ENCODE measurements at regions of chr19 and their contacts with region 1.

Region 1: DNA sequence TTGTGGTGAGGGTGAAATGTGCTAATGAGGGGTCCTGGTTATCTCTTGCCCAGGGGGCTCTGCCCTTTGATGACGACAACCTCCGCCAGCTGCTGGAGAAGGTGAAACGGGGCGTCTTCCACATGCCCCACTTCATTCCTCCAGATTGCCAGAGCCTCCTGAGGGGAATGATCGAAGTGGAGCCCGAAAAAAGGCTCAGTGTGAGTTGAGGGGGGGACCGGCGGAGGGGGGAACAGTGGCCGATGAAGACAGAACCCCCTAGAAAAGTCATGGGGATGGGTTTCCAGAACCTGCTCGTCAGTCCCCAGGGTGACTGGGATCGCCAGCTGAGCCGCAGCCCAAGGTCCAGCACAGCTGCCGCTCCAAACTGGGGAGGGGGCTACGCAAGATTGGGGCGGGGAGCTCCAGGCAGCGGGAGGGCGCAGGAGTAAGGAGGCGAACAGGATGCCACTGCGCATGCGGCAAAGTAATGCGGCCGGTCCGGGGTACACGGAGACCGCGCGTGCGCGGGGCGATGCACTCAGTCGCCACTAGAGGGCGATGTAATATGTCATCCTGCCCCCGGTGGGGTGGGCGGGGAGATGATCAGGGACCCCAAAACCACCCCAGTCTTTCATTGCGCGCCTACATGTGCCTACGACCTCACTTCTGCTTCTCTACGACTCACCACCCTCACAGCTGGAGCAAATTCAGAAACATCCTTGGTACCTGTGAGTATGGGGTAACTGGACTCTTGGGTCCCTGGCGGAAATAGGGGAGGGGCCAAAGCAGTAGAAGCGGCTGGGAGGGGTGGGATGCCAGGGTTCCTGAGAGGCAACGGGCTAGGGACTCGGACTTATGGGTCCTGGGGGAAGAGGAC is 17.9 kb downstream of the BRSK1 start:
- DNase-seq: peak; percentile 84 to 96 (median 90)
- ATAC-seq: peak; percentile 80 to 93 (median 90)
- H3K4me3 ChIP-seq: peak overlapping the region in 10 of 12 donors; percentile 30 to 58 (median 46)
- H3K27ac ChIP-seq: peak overlapping the region in 1 of 12 donors; percentile 34
- H3K4me1 ChIP-seq: peaks cover 0 to 10% (median 4%) of the 10 kb centered on the region in 12 donors
- H3K27me3 ChIP-seq: no peaks in the 10 kb centered on the region
- CTCF ChIP-seq: peak; percentile 94 to 99 (median 97)
- POLR2A ChIP-seq: no peak

Region 2: DNA sequence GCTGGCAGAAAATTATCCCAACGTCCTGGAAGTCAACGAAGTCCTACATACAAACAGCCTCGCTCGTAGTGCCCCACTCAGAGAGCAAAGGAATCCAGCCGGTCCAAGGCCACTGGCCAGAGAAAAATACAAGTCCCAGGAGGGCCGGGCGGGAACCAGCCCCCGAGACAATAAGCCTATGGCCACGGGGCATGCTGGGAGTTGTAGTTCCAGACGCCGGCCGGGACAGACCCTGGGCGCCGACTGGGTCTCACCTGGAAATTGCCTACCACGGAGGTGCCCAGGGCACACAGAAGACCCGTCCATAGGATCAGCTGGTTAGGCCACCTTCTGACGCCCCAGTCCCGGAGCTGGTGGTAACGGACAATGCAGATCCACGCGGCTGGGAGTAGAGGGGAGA is 18.1 kb after region 1 on chr19:
- intact Hi-C with region 1: no loop called
- DNase-seq: peak in 2 of 5 donors; percentile 61 to 66
- ATAC-seq: peak in 3 of 4 donors; percentile 75 to 88 (median 86)
- H3K4me3 ChIP-seq: no peak overlapping the region
- H3K27ac ChIP-seq: no peak overlapping the region
- H3K4me1 ChIP-seq: peaks cover 0 to 7% (median 0%) of the 10 kb centered on the region in 12 donors
- H3K27me3 ChIP-seq: peaks cover 0 to 9% (median 0%) of the 10 kb centered on the region in 9 donors
- CTCF ChIP-seq: no peak
- POLR2A ChIP-seq: no peak

Region 3: GRCh38 chr19:55339048-55339888 is 37.6 kb after region 1 on chr19 and contains the start of gene KMT5C:
- intact Hi-C with region 1: loop called in 3 of 10 experiments (anchors 5 kb)
- DNase-seq: peak; percentile 100
- ATAC-seq: peak; percentile 93 to 97 (median 96)
- H3K4me3 ChIP-seq: peak within 1 kb of the TSS; percentile 33 to 94 (median 72)
- H3K27ac ChIP-seq: peak within 1 kb of the TSS; percentile 75 to 94 (median 90)
- H3K4me1 ChIP-seq: peaks cover 0 to 29% (median 16%) of the 10 kb centered on the region in 12 donors
- H3K27me3 ChIP-seq: peaks cover 0 to 7% (median 0%) of the 10 kb centered on the region in 9 donors
- CTCF ChIP-seq: peak in 11 of 12 donors; percentile 12 to 66 (median 35)
- POLR2A ChIP-seq: peak in 1 of 2 donors; percentile 66
- total RNA-seq, gene KMT5C: 3.6 to 10.8 (median 7.2) TPM

Region 4: DNA sequence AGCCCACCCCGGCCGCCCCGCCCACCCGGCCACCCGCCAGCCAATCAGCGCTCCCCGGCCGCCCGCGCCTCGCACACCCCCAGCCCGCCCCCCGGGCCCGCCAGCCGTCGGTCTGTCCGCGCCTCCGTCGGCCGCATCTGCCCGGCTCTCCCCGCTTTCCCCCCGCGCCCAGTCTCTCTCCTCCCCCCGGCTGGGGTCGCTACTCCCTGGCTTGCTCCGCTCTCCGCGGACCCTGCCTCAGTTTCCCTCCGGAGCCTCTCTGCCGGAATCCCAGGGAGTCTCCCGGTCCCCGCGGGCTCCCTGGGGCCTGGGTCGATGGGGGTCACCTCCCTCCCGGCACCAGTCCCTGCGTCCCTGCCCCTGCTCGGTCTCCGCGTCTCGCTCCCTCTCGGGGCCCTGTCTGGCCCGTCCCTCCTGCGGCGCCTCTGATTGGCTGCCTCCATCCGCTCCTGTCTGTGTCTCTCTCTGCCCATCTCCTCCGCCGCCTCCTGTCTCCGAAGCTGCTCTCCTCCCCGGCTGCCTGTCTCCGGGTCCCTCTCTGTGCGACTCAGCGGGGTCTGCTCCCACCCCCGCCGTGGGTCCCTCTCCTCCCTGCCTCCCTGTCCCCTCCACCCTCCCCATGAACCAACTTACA is 68.1 kb after region 1 on chr19:
- intact Hi-C with region 1: loop called in 2 of 10 experiments (anchors 10 kb)
- DNase-seq: peak in 1 of 5 donors; percentile 52
- ATAC-seq: peak in 3 of 4 donors; percentile 45 to 55 (median 46)
- H3K4me3 ChIP-seq: peak overlapping the region in 10 of 12 donors; percentile 5 to 42 (median 28)
- H3K27ac ChIP-seq: no peak overlapping the region
- H3K4me1 ChIP-seq: peaks cover 0 to 27% (median 3%) of the 10 kb centered on the region in 12 donors
- H3K27me3 ChIP-seq: peaks cover 38 to 75% (median 59%) of the 10 kb centered on the region in 9 donors
- CTCF ChIP-seq: no peak
- POLR2A ChIP-seq: no peak

Region 5: DNA sequence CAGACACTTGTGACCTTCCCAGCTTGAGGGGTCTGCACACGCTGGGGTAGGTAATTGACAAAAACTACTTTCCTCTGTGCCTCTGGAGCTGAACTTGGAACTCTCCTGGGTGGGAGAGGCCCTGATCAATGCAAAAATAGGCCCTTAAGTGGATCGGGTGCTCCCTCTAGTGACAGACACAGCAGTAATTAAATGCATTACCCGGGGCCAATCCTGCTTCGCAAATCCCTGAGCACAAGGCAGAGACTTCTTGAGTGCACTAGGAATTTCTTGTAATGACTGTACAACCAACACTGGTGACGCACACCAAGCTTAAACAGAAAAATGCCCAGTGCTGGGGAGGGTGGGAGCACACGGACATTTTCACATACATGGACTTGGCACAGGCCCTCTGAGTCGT is 116.5 kb after region 1 on chr19:
- intact Hi-C with region 1: loop called in 2 of 10 experiments (anchors 10 kb)
- DNase-seq: peak in 3 of 5 donors; percentile 27 to 52 (median 43)
- ATAC-seq: peak in 3 of 4 donors; percentile 81 to 85 (median 85)
- H3K4me3 ChIP-seq: no peak overlapping the region
- H3K27ac ChIP-seq: no peak overlapping the region
- H3K4me1 ChIP-seq: no peaks in the 10 kb centered on the region
- H3K27me3 ChIP-seq: peaks cover 0 to 18% (median 0%) of the 10 kb centered on the region in 9 donors
- CTCF ChIP-seq: peak; percentile 43 to 72 (median 62)
- POLR2A ChIP-seq: no peak

Region 6: DNA sequence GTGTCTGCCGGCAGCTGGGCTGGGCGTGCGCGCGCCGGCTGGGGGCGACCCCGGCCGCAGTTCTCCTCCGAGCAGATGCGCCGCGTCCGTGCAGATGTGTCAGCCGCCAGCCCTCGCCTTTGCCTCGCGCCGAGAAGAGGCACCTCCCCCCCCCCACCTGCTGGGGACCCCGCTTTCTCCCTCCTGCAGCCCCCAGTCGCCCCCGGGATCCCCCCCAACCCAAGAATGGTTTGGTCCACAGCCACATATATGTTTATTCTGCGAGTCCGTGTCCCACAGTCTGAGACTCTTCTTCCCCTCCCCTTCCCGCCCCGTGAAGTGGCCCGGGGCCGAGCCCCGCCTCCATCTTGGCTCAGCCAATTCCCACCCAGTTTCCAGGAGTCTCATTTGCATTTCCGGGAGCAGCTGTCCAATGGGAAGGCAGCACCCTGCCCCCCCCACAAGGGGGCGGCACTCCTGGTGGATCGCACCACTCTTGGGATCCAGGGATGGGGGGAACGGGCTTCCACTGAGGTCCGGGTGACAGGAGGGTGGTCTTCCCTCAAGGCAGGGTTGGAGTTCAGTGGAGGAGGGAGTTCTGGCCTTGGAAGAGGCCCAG is 151.2 kb after region 1 on chr19:
- intact Hi-C with region 1: no loop called
- DNase-seq: peak; percentile 65 to 85 (median 72)
- ATAC-seq: peak; percentile 47 to 89 (median 78)
- H3K4me3 ChIP-seq: peak overlapping the region in 2 of 12 donors; percentile 21 to 29
- H3K27ac ChIP-seq: no peak overlapping the region
- H3K4me1 ChIP-seq: peaks cover 0 to 23% (median 11%) of the 10 kb centered on the region in 12 donors
- H3K27me3 ChIP-seq: peaks cover 14 to 35% (median 21%) of the 10 kb centered on the region in 9 donors
- CTCF ChIP-seq: peak in 2 of 12 donors; percentile 10 to 22
- POLR2A ChIP-seq: no peak